Activated T-helper 1 cell treated with anti-CD3 and anti-CD28 coated beads, Interleukin-12 subunit alpha, Interleukin-12 subunit beta, Interleukin-2, Interleukin-4 antibody, amounts not matched to agents 30 ng/mL and 10 ng/mL and 1 ng/mL, durations not matched to agents 14 hours and 24 hours and 36 hours (primary cell): ENCODE measurements at regions of chr2 and their contacts with region 1.

Region 1: GRCh38 chr2:203814661-203815540 is 52.7 kb upstream of the CTLA4 start:
- DNase-seq: no peak
- H3K4me3 Mint-ChIP-seq: peak overlapping the region; percentile 24
- H3K27ac Mint-ChIP-seq: peak overlapping the region; percentile 37
- H3K4me1 Mint-ChIP-seq: peaks cover 62% of the 10 kb centered on the region
- H3K27me3 Mint-ChIP-seq: peaks cover 6% of the 10 kb centered on the region

Region 2: GRCh38 chr2:202588647-202589581 is 1226.0 kb before region 1 on chr2:
- intact Hi-C with region 1: loop called (anchors 1 kb)
- DNase-seq: peak; percentile 49
- H3K4me3 Mint-ChIP-seq: no peak overlapping the region
- H3K27ac Mint-ChIP-seq: no peak overlapping the region
- H3K4me1 Mint-ChIP-seq: peaks cover 7% of the 10 kb centered on the region
- H3K27me3 Mint-ChIP-seq: no peaks in the 10 kb centered on the region

Region 3: GRCh38 chr2:203238704-203239526 is 576.0 kb before region 1 on chr2 and contains the start of gene CYP20A1:
- intact Hi-C with region 1: loop called (anchors 5 kb)
- DNase-seq: peak; percentile 97
- H3K4me3 Mint-ChIP-seq: peak within 1 kb of the TSS; percentile 94
- H3K27ac Mint-ChIP-seq: peak within 1 kb of the TSS; percentile 98
- H3K4me1 Mint-ChIP-seq: peaks cover 26% of the 10 kb centered on the region
- H3K27me3 Mint-ChIP-seq: no peaks in the 10 kb centered on the region
- total RNA-seq, gene CYP20A1: 23.1 and 26.0 TPM in 2 replicates

Region 4: DNA sequence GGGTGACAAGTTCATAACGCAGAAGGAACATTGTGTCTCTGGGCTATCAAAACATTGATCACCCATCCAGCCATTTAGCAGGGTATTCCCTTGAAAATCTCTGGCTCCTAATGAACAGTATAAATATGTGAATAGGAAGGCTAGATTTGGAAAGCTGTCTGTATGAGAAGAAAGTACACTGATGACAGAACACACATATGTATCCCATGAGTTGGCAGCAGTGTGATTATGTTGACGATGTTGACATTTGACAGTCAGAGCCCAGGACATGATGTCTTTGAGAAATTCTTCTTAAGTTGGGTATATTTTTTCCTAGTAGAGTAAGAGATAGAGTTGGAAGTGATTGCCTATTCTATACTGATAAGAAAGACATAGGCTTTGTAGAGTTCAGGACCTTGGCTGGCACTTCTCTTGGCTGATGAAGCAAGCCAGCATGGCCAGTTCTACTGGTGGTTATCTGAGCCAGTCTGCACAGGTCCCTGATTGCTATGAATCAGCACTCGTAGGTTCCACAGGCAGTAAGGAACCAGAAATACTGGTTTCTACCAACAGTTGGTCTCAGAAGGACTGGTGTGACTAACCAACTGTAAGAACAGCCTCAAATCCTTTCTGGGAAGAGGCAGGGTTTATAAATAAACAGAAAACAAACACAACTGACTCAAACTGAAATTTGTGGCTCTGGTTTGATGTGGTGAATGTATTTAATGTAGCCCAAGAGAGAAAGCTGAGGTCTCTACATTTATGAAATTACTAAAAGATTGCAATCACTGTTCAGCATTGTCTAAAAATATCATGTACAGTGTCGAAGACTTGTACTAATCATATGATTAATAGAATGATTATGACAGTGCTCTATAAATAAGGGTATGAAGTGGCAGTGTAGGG is 235.9 kb before region 1 on chr2:
- intact Hi-C with region 1: loop called (anchors 1 kb)
- DNase-seq: peak; percentile 64
- H3K4me3 Mint-ChIP-seq: peak overlapping the region; percentile 38
- H3K27ac Mint-ChIP-seq: peak overlapping the region; percentile 46
- H3K4me1 Mint-ChIP-seq: peaks cover 49% of the 10 kb centered on the region
- H3K27me3 Mint-ChIP-seq: peaks cover 40% of the 10 kb centered on the region

Region 5: GRCh38 chr2:203730076-203730729 is 84.7 kb before region 1 on chr2:
- intact Hi-C with region 1: loop called (anchors 2 kb)
- DNase-seq: no peak
- H3K4me3 Mint-ChIP-seq: peak overlapping the region; percentile 32
- H3K27ac Mint-ChIP-seq: peak overlapping the region; percentile 97
- H3K4me1 Mint-ChIP-seq: peaks cover 92% of the 10 kb centered on the region
- H3K27me3 Mint-ChIP-seq: no peaks in the 10 kb centered on the region

Region 6: DNA sequence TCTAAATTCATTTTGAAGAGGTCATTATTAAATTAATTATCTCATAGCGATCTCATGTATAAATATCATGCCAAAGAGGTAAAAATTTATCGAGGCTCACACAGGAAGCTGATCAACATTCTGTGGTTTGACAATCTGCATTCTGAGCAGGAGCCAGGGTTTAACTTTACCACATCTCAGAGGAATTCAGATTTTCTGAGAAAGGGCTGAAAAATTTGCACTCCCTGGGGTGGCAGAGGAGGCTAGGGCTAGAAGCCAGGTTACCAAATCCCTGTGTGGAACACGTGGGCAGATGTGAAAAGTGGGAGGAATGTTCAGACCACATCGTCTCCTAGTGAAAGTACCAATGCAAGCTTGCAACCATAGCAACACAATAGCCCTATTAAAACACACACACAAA is 10.8 kb before region 1 on chr2:
- intact Hi-C with region 1: loop called (anchors 1 kb)
- DNase-seq: no peak
- H3K4me3 Mint-ChIP-seq: peak overlapping the region; percentile 19
- H3K27ac Mint-ChIP-seq: peak overlapping the region; percentile 76
- H3K4me1 Mint-ChIP-seq: peaks cover 80% of the 10 kb centered on the region
- H3K27me3 Mint-ChIP-seq: peaks cover 2% of the 10 kb centered on the region